Mammary epithelial cell (primary cell): ENCODE measurements at regions of chr1 and their contacts with region 1.

Region 1: DNA sequence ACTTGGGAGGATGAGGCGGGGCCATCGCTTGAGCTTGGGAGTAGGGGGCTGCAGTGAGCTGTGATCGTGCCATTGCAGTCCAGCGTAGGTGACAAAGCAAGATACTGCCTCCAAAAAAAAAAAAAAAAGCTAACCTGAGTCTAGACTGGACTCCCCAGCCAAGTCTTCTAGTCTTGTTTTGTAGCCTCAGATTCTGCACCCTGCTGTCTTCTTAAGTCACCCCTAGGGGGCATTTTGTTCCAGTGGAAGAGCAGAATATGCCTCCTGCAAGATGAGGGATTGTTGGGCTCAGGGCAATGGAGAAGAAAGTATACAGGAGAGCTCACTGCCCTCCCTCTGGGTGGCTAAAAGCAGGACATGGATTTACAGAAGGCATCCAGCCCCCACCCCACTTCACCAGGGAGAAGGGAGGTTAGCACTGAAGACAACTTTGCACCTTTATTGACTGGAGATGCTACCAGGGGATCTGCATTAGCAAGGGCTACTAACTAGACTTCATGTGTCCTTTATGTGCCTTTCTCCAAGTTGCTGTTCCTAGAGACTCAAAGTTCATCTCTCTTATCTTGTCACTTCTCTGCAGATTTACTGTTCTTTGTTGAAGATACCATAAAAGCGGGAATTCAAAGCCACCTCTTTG is 15.3 kb upstream of the RNF187 start:
- DNase-seq: peak; percentile 24
- H3K4me3 ChIP-seq: no peak overlapping the region
- H3K27ac ChIP-seq: no peak overlapping the region
- H3K4me1 ChIP-seq: peaks cover 6% of the 10 kb centered on the region
- H3K27me3 ChIP-seq: peaks cover 13% of the 10 kb centered on the region
- CTCF ChIP-seq: peak; percentile 57 to 71

Region 2: GRCh38 chr1:228185641-228185965 is 286.3 kb before region 1 on chr1:
- CTCF ChIA-PET with region 1: interaction called, 10 read pairs
- dilution Hi-C with region 1: loop called (anchors 10 kb)
- in situ Hi-C with region 1: no loop called
- intact Hi-C with region 1: no loop called
- DNase-seq: no peak
- H3K4me3 ChIP-seq: no peak overlapping the region
- H3K27ac ChIP-seq: no peak overlapping the region
- H3K4me1 ChIP-seq: no peaks in the 10 kb centered on the region
- H3K27me3 ChIP-seq: no peaks in the 10 kb centered on the region
- CTCF ChIP-seq: no peak

Region 3: DNA sequence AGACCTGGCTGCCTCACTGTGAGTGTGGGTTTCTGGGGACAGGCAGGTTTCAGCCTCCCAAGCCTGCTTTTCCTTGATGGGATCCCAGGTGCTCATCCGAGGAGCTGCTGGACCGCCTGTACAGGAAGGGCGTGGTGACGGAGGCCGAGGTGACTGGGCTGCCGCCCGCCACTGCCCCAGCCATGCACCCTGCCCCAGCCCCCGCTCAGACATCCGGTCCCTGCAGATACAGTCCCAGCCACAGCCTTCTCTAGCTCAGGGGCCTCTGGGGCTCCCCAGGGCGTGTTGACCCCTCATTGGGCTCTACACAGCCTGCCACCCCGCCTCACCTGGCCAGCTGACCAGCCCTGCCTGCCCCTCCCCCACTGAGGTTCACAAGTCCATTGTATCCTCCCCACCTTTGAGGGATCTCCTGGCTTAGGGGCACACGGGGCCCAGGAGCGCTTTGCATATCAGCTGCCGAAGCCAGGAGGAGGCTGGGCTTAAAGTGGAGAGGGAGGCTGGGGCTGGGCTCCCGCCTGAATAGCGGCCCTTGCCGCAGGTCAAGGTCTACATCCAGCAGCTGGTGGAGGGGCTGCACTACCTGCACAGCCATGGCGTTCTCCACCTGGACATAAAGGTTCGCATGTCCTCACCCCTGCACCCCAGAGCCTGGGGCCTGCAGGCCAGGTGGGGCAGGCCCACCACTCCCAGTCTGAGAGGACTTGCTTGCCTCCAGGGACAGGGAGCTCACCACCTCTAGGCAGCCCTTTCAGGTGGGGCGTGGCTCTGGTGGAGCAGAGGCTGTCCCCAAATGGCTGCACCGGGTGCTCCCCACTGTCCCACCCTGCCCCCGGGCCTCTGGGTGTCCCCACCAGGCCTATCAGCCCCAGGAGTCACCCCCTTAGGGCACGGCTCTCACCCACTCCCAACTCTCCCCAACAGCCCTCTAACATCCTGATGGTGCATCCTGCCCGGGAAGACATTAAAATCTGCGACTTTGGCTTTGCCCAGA is 103.8 kb before region 1 on chr1:
- CTCF ChIA-PET with region 1: no interaction called
- dilution Hi-C with region 1: no loop called
- in situ Hi-C with region 1: no loop called
- intact Hi-C with region 1: no loop called
- DNase-seq: no peak
- H3K4me3 ChIP-seq: no peak overlapping the region
- H3K27ac ChIP-seq: no peak overlapping the region
- H3K4me1 ChIP-seq: peaks cover 3% of the 10 kb centered on the region
- H3K27me3 ChIP-seq: peaks cover 3% of the 10 kb centered on the region
- CTCF ChIP-seq: no peak

Region 4: GRCh38 chr1:228378090-228378872 is 93.6 kb before region 1 on chr1:
- CTCF ChIA-PET with region 1: no interaction called
- dilution Hi-C with region 1: no loop called
- in situ Hi-C with region 1: no loop called
- intact Hi-C with region 1: no loop called
- DNase-seq: peak; percentile 42
- H3K4me3 ChIP-seq: peak overlapping the region; percentile 49 to 60 (median 59)
- H3K27ac ChIP-seq: no peak overlapping the region
- H3K4me1 ChIP-seq: peaks cover 16% of the 10 kb centered on the region
- H3K27me3 ChIP-seq: no peaks in the 10 kb centered on the region
- CTCF ChIP-seq: peak; percentile 31 to 51

Region 5: GRCh38 chr1:228445843-228446650 is 25.8 kb before region 1 on chr1:
- CTCF ChIA-PET with region 1: no interaction called
- dilution Hi-C with region 1: no loop called
- in situ Hi-C with region 1: no loop called
- intact Hi-C with region 1: no loop called
- DNase-seq: no peak
- H3K4me3 ChIP-seq: peak overlapping the region; percentile 0 to 35 (median 34)
- H3K27ac ChIP-seq: no peak overlapping the region
- H3K4me1 ChIP-seq: peaks cover 9% of the 10 kb centered on the region
- H3K27me3 ChIP-seq: peaks cover 3% of the 10 kb centered on the region
- CTCF ChIP-seq: no peak

Region 6: GRCh38 chr1:228483789-228484188 is 11.9 kb after region 1 on chr1:
- CTCF ChIA-PET with region 1: no interaction called
- dilution Hi-C with region 1: no loop called
- in situ Hi-C with region 1: no loop called
- intact Hi-C with region 1: loop called (anchors 2 kb)
- DNase-seq: no peak
- H3K4me3 ChIP-seq: no peak overlapping the region
- H3K27ac ChIP-seq: no peak overlapping the region
- H3K4me1 ChIP-seq: peaks cover 6% of the 10 kb centered on the region
- H3K27me3 ChIP-seq: no peaks in the 10 kb centered on the region
- CTCF ChIP-seq: no peak

Region 7: DNA sequence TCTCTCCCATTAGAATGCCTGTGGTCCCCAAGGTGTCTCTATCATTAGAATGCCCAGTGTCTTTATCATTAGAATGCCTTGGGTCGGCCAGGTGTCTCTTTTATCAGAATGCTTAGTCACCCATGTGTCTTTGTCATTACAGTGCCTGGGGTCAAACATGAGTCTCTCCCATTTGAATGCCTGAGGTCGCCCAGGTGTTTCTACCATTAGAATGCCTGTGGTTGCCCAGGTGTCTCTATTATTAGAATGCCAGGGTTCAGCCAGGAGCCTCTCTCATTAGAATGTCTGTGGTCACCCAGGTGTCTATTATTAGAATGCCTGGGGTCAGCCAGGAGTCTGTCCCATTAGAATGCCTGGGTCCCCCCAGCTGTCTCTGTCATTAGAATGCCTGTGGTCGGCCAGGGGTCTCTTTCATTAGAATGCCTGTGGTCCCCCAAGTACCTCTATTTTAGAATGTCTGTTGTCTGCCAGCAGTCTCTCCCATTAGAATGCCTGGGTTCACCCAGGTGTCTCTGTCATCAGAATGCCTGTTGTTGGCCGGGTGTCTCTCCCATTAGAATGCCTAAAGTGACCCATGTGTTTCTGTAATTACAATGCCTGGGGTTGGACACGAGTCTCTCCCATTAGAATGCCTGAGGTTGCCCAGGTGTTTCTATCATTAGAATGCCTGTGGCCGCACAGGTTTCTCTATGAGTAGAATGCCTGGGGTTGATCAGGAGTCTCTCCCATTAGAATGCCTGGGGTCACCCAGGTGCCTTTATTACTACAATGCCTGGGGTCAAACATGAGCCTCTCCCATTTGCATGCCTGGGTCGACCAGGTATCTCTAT is 72.4 kb after region 1 on chr1:
- CTCF ChIA-PET with region 1: no interaction called
- dilution Hi-C with region 1: no loop called
- in situ Hi-C with region 1: no loop called
- intact Hi-C with region 1: no loop called
- DNase-seq: peak; percentile 79
- H3K4me3 ChIP-seq: no peak overlapping the region
- H3K27ac ChIP-seq: no peak overlapping the region
- H3K4me1 ChIP-seq: peaks cover 3% of the 10 kb centered on the region
- H3K27me3 ChIP-seq: no peaks in the 10 kb centered on the region
- CTCF ChIP-seq: no peak